ENCODE measurements at regions of chr17 and their contacts with region 1.

Region 1: DNA sequence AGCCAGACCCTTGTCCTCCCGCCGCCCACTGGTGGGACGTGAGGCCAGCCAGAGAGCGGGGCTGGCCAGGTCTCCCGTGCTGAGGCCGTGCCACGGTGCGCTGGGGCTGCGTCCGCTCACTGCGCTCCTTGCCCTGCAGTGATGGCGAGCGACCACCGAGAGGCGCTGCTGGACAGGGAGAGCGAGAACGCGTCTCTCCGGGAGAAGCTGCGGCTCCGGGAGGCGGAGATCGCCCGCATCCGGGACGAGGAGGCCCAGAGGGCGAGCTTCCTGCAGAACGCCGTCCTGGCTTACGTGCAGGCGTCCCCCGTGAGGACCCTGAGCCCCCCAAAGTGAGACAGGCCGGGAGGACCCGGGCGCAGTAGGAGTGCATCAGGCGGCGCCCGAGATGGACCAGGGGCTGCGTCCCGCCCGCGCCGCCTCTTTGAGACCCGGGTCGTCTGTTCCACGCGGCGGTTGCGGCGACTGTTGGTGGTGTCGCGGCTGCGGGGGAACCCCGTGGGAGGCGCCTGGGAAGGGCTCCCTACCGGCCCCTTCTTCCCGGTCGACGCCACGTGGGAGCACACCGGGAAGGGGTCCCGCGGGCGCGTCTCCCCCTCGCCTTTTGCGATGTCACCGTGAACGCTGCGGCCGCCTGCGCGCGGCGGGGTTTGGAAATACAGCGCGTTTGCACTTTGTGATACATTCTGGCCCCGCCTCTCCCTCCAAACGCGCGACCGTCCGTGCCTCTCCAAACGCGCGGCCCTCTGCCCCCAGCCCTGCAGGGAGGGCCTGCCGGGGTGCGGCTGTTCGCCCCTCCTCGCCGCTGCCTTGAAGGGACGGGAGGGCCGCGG is 792 bp upstream of the RAC3 start:
- DNase-seq: peak; percentile 68 to 78
- ATAC-seq: peak; percentile 87 to 89
- H3K4me3 ChIP-seq: peak overlapping the region; percentile 46 to 61 (median 57)
- H3K27ac ChIP-seq: no peak overlapping the region
- H3K4me1 ChIP-seq: peaks cover 2 to 22% of the 10 kb centered on the region in 2 donors
- H3K27me3 ChIP-seq: peaks cover 10 to 14% (median 11%) of the 10 kb centered on the region in 3 donors
- CTCF ChIP-seq: peak; percentile 96 to 99 (median 97)
- POLR2A ChIP-seq: peak in 1 of 2 donors; percentile 11

Region 2: GRCh38 chr17:82006468-82007227 is 24.0 kb before region 1 on chr17:
- in situ Hi-C with region 1: no loop called
- intact Hi-C with region 1: no loop called
- DNase-seq: no peak
- ATAC-seq: no peak
- H3K4me3 ChIP-seq: no peak overlapping the region
- H3K27ac ChIP-seq: no peak overlapping the region
- H3K4me1 ChIP-seq: peaks cover 25 to 35% of the 10 kb centered on the region in 2 donors
- H3K27me3 ChIP-seq: no peaks in the 10 kb centered on the region
- CTCF ChIP-seq: no peak
- POLR2A ChIP-seq: no peak

Region 3: GRCh38 chr17:82019690-82020571 is 10.8 kb before region 1 on chr17:
- in situ Hi-C with region 1: no loop called
- intact Hi-C with region 1: no loop called
- DNase-seq: peak in 1 of 2 donors; percentile 54
- ATAC-seq: no peak
- H3K4me3 ChIP-seq: no peak overlapping the region
- H3K27ac ChIP-seq: no peak overlapping the region
- H3K4me1 ChIP-seq: peaks cover 25 to 63% of the 10 kb centered on the region in 2 donors
- H3K27me3 ChIP-seq: no peaks in the 10 kb centered on the region
- CTCF ChIP-seq: peak; percentile 58 to 85 (median 60)
- POLR2A ChIP-seq: no peak

Region 4: DNA sequence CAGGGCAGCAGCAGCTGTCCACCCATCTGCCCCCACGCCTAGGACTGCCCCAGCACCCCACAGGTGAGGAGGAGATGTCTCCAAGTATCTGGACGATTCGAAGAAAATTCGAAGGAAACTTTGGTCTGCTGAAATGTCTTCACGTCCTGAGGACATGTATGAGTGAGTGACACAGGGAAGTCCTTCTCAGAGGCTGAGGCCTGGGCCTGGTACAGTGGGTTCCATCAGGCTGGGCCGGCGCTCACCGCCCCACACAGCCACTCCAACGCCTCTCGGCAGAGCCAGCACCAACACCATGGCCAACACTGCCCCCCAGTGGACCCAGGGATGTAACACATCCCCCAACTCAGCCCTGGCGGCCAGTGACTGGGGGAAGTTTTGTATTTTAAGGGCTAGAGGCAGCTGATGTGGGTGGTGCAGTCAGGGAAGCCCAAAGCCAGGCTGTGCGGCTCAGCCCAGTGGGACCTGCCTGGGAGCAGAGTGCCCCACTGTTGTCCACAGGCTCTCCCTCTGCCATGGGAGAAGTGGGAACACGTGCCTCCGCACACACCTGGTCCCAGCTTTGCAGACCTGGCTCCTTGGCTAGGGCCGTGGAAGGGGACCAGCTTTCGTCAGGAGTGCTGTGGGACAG is 123.2 kb after region 1 on chr17:
- in situ Hi-C with region 1: loop called (anchors 10 to 25 kb)
- intact Hi-C with region 1: loop called (anchors 1 kb)
- DNase-seq: peak; percentile 66 to 80
- ATAC-seq: peak; percentile 78
- H3K4me3 ChIP-seq: no peak overlapping the region
- H3K27ac ChIP-seq: peak overlapping the region in 2 of 4 donors; percentile 80 to 81
- H3K4me1 ChIP-seq: peaks cover 17 to 20% of the 10 kb centered on the region in 2 donors
- H3K27me3 ChIP-seq: no peaks in the 10 kb centered on the region
- CTCF ChIP-seq: peak; percentile 89 to 96 (median 93)
- POLR2A ChIP-seq: no peak